ENCODE measurements at regions of chr3 and their contacts with region 1.

Region 1: GRCh38 chr3:47849699-47850563 is 47.0 kb downstream of the DHX30 start:
- DNase-seq: no peak
- ATAC-seq: peak; percentile 13

Region 2: GRCh38 chr3:47989981-47990440 is 140.1 kb after region 1 on chr3:
- intact Hi-C with region 1: loop called (anchors 10 kb)
- DNase-seq: peak; percentile 64
- ATAC-seq: peak; percentile 92